GM12878 (cell line): ENCODE measurements at regions of chr2 and their contacts with region 1.

Region 1: GRCh38 chr2:95076784-95077529 is 44.7 kb downstream of the MRPS5 start:
- DNase-seq: no peak
- ATAC-seq: peak; percentile 93
- H3K4me3 ChIP-seq: peak overlapping the region; percentile 28; the same call in 1 of the 2 replicates
- H3K27ac ChIP-seq: no peak overlapping the region
- H3K4me1 ChIP-seq: peaks cover 14% of the 10 kb centered on the region
- H3K27me3 ChIP-seq: no peaks in the 10 kb centered on the region; a peak in 2 of 4 replicates
- CTCF ChIP-seq: peak; percentile 76 to 91 (median 84)
- EP300 ChIP-seq: no peak
- POLR2A ChIP-seq: peak; percentile 30; the same call in 1 of the 2 replicates
- RAD21 ChIP-seq: peak; percentile 56

Region 2: GRCh38 chr2:95012881-95013550 is 63.9 kb before region 1 on chr2:
- CTCF ChIA-PET with region 1: interaction called, 10 read pairs
- POLR2A ChIA-PET with region 1: no interaction called
- RAD21 ChIA-PET with region 1: interaction called, 13 read pairs
- SMC1A ChIA-PET with region 1: interaction called, 3 read pairs
- in situ Hi-C with region 1: no loop called
- intact Hi-C with region 1: no loop called
- DNase-seq: peak; percentile 57
- ATAC-seq: peak; percentile 88
- H3K4me3 ChIP-seq: no peak overlapping the region
- H3K27ac ChIP-seq: peak overlapping the region; percentile 27; the same call in 1 of the 2 replicates
- H3K4me1 ChIP-seq: peaks cover 29% of the 10 kb centered on the region
- H3K27me3 ChIP-seq: no peaks in the 10 kb centered on the region
- CTCF ChIP-seq: no peak
- EP300 ChIP-seq: no peak
- POLR2A ChIP-seq: no peak
- RAD21 ChIP-seq: no peak

Region 3: DNA sequence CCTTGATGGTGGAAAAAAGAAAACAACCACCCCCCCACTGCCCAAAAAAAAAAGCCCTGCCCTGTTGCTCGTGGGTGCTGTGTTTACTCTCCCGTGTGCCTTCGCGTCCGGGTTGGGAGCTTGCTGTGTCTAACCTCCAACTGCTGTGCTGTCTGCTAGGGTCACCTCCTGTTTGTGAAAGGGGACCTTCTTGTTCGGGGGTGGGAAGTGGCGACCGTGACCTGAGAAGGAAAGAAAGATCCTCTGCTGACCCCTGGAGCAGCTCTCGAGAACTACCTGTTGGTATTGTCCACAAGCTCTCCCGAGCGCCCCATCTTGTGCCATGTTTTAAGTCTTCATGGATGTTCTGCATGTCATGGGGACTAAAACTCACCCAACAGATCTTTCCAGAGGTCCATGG is 23.4 kb before region 1 on chr2:
- CTCF ChIA-PET with region 1: interaction called, 14 read pairs
- POLR2A ChIA-PET with region 1: interaction called, 3 read pairs
- RAD21 ChIA-PET with region 1: interaction called, 22 read pairs
- SMC1A ChIA-PET with region 1: interaction called, 4 read pairs
- in situ Hi-C with region 1: no loop called
- intact Hi-C with region 1: no loop called
- DNase-seq: no peak
- ATAC-seq: peak; percentile 25; the same call in 2 of the 3 replicates
- H3K4me3 ChIP-seq: no peak overlapping the region
- H3K27ac ChIP-seq: no peak overlapping the region
- H3K4me1 ChIP-seq: peaks cover 26% of the 10 kb centered on the region
- H3K27me3 ChIP-seq: no peaks in the 10 kb centered on the region
- CTCF ChIP-seq: peak; percentile 23 to 54 (median 35); a peak in 4 of 6 replicates
- EP300 ChIP-seq: no peak
- POLR2A ChIP-seq: no peak
- RAD21 ChIP-seq: peak; percentile 72

Region 4: DNA sequence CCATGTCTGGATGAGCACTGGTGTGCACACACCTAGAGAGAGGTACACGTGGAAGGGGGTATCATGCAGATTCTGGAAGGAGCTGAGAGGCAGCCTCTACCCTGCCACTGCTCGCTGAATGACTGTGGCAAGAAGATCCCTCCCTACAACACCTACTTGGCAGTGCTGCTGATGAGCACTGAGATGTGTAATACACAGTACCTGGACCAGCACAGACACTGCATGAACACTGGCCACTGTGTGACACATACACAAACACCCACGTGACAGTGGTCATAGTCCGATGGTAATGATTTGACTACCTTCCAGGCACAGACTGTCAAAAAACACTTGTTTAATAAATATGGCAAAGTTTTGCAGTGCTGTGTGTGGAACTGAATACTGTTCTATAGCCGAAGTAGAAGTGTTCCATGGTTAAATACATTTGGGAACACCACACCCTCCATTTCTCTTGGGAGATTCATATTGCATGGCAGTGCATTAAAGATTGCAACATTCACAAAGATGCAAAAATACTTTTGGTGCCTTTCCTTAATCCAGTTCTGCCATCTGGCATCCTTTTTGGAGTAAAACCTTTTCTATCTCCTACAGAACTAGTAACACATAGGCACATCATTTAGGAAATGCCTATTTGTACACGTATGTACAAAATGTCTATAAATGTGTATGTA is 15.1 kb after region 1 on chr2:
- CTCF ChIA-PET with region 1: interaction called, 15 read pairs
- POLR2A ChIA-PET with region 1: no interaction called
- RAD21 ChIA-PET with region 1: interaction called, 4 read pairs
- SMC1A ChIA-PET with region 1: no interaction called
- in situ Hi-C with region 1: no loop called
- intact Hi-C with region 1: no loop called
- DNase-seq: no peak
- ATAC-seq: no peak
- H3K4me3 ChIP-seq: no peak overlapping the region
- H3K27ac ChIP-seq: no peak overlapping the region
- H3K4me1 ChIP-seq: no peaks in the 10 kb centered on the region
- H3K27me3 ChIP-seq: no peaks in the 10 kb centered on the region
- CTCF ChIP-seq: no peak
- EP300 ChIP-seq: no peak
- POLR2A ChIP-seq: no peak
- RAD21 ChIP-seq: no peak

Region 5: DNA sequence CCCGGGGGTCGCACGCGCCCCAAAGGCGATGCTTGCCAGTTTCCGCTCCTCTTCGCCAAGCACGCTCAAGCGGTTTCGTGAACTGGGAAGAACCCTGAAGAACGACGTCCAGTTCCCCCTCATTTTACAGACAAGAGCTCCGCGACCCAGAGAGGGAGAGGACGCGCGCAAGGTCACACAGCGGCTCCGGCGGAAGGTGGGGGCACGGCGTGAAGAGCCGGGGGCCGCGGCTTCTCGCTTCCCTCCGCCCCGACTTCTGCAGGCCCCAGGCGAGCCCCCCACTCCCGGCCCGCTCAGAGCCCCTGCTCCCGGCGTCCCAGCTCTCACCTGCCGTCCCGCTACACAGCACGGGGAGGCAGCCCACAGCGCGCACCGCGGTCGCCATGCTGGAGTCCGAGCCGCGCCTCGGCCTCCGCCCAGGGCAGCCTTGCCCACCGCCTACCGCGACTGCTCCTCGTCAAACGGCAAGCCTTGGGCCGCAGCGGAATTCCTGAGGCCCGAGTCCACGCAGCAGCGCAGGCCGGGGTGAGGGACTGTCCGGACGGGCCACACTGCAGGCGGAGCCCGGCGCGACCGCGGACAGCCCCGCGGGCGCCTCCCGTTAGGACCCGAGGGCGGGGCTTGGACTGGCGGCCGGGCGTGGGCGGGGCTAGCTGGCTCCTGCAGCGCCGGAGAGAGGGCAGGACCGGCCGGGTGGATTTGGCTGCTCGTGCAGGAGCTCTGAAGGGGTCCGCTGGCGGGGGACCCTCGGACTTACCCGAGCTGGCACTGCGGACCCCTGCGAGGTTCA is 44.6 kb after region 1 on chr2 and contains the start of gene MRPS5:
- CTCF ChIA-PET with region 1: interaction called, 29 read pairs
- POLR2A ChIA-PET with region 1: no interaction called
- RAD21 ChIA-PET with region 1: interaction called, 13 read pairs
- SMC1A ChIA-PET with region 1: interaction called, 4 read pairs
- in situ Hi-C with region 1: no loop called
- intact Hi-C with region 1: no loop called
- DNase-seq: peak; percentile 13
- ATAC-seq: peak; percentile 93
- H3K4me3 ChIP-seq: peak within 1 kb of the TSS; percentile 93
- H3K27ac ChIP-seq: peak within 1 kb of the TSS; percentile 98
- H3K4me1 ChIP-seq: peaks cover 16% of the 10 kb centered on the region
- H3K27me3 ChIP-seq: no peaks in the 10 kb centered on the region
- CTCF ChIP-seq: 0 out of 6 replicates have a peak, but pooled peaks of 2 of the 3 experiments have one; percentile 5 to 23
- EP300 ChIP-seq: no peak
- POLR2A ChIP-seq: peak; percentile 94
- RAD21 ChIP-seq: no peak
- polyA plus RNA-seq, gene MRPS5: 54.8 to 77.0 TPM